Right cardiac atrium (tissue), 5 donors: ENCODE measurements at regions of chr1 and their contacts with region 1.

Region 1: DNA sequence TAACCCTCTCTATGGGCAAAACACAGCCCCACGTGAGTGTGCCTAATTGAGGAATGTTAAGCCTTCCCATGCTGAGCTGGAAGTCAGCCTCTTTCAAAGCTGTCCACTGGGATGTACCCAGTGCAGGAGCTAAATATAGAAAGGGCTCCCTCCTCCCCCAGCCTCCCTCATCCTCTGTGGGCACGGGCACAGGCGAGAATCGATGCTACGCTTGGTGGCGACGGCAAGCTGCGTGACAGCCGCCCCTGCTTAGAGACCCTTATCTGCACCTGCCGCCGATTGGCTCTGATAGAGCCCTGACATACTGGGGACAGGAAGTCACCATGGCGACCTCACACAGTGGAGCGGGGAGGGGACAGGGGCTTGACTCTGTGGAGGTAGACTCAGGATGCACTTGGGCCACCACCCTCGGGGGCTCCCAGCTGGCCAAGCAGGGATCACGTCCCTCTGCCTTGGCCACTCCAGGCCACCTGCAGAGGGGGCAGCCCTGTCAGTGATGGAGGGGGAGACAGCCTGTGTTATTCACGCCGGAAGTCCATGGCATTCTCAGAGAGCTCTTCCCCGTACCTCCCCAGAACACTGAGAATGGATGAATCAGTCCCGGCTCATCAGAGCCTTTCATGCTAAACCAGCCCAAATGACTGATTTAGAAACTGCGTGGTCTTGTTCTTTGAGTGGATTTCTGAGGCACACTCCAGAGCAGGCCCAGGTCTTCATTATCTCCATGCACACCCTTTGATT is 84.8 kb downstream of the KCND3 start:
- DNase-seq: peak in 2 of 3 donors; percentile 25 to 54
- ATAC-seq: peak; percentile 87 to 89
- H3K4me3 ChIP-seq: no peak overlapping the region
- H3K27ac ChIP-seq: peak overlapping the region; percentile 54
- H3K4me1 ChIP-seq: peaks cover 4% of the 10 kb centered on the region
- H3K27me3 ChIP-seq: no peaks in the 10 kb centered on the region

Region 2: GRCh38 chr1:111848852-111849545 is 55.6 kb before region 1 on chr1:
- intact Hi-C with region 1: loop called in 1 of 4 experiments (anchors 10 kb)
- DNase-seq: no peak
- ATAC-seq: no peak
- H3K4me3 ChIP-seq: no peak overlapping the region
- H3K27ac ChIP-seq: peak overlapping the region; percentile 39
- H3K4me1 ChIP-seq: peaks cover 10% of the 10 kb centered on the region
- H3K27me3 ChIP-seq: no peaks in the 10 kb centered on the region